ENCODE measurements at regions of chr15 and their contacts with region 1.

Region 1: GRCh38 chr15:23835953-23836352 is 148.8 kb upstream of the NDN start:
- DNase-seq: no peak
- H3K4me3 ChIP-seq: no peak overlapping the region
- H3K27ac ChIP-seq: no peak overlapping the region
- H3K4me1 ChIP-seq: no peaks in the 10 kb centered on the region
- H3K27me3 ChIP-seq: no peaks in the 10 kb centered on the region
- CTCF ChIP-seq: no peak

Region 2: GRCh38 chr15:23773093-23773492 is 62.9 kb before region 1 on chr15:
- CTCF ChIA-PET with region 1: no interaction called
- POLR2A ChIA-PET with region 1: no interaction called
- intact Hi-C with region 1: loop called (anchors 10 kb)
- DNase-seq: no peak
- H3K4me3 ChIP-seq: no peak overlapping the region
- H3K27ac ChIP-seq: no peak overlapping the region
- H3K4me1 ChIP-seq: no peaks in the 10 kb centered on the region
- H3K27me3 ChIP-seq: no peaks in the 10 kb centered on the region
- CTCF ChIP-seq: no peak

Measured in A673 (cell line).